ENCODE measurements at regions of chrX and their contacts with region 1.

Region 1: DNA sequence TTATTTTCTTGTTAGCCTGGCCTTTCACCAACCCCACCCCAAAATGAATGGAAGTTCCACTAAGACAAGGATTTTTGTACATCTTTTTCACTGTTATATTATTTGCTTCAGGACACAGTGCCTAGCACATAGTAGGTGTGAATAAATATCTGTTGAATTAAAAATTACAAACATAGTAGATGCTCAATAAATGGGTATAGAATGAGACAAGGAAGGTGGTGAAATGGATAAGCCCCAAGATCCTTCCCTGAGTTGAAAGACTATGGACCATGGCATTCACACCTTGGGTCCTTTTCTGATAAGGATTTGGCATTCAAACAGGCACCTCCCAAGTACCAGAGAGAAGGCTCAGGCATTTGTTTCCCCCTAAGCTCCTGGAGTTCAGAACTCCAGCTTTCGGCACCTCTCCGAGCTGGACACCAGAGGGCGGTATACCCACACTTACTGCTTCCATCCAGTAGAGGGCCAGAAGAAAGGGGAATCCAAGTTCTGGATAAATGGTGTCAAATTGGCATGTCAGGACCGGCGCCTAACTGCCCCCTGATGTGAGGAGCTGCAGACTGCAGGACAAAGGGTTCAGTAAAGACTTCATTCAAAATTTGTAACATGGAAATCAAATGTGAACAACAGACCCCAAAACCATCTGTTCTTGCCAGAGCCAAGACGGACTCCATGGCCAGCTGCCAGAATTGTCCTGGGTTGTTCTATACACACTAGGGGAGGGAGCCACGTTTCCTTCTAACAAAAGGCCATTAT is 193.0 kb downstream of the GPC3 start:
- DNase-seq: peak; percentile 59
- ATAC-seq: peak; percentile 91
- H3K4me3 ChIP-seq: 0 out of 4 replicates have a peak overlapping the region, but pooled peaks of 1 of the 2 experiments have one; percentile 23
- H3K27ac ChIP-seq: no peak overlapping the region
- H3K4me1 ChIP-seq: peaks cover 0 to 3% of the 10 kb centered on the region in 2 experiments; a peak in 1 of 4 replicates
- H3K27me3 ChIP-seq: no peaks in the 10 kb centered on the region
- CTCF ChIP-seq: peak; percentile 92 to 99 (median 94)
- POLR2A ChIP-seq: no peak
- RAD21 ChIP-seq: peak; percentile 80

Region 2: DNA sequence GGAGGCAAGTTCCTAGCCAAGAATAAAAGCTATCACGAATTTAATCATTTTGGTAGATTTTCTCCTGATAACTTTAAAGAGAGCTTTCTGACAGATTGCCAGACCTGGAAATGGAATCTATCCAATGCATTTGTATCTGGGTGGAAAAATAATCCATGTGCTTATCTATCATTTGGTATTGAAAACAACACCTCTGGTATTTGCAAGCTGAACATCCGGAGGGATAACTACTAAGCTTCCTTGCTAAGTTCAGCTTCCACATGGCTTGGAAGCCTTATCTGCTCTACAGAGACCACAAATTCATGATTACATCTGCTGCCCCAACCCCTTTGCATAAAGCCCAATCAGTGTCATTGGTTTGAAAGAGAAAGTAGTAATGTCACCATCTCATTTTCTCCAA is 37.7 kb before region 1 on chrX:
- CTCF ChIA-PET with region 1: no interaction called
- POLR2A ChIA-PET with region 1: no interaction called
- RAD21 ChIA-PET with region 1: no interaction called
- intact Hi-C with region 1: no loop called
- DNase-seq: no peak
- ATAC-seq: no peak
- H3K4me3 ChIP-seq: no peak overlapping the region
- H3K27ac ChIP-seq: no peak overlapping the region
- H3K4me1 ChIP-seq: no peaks in the 10 kb centered on the region
- H3K27me3 ChIP-seq: 0 out of 2 replicates have a peak, but pooled peaks cover 9% of the 10 kb centered on the region
- CTCF ChIP-seq: no peak
- POLR2A ChIP-seq: no peak
- RAD21 ChIP-seq: no peak

Region 3: DNA sequence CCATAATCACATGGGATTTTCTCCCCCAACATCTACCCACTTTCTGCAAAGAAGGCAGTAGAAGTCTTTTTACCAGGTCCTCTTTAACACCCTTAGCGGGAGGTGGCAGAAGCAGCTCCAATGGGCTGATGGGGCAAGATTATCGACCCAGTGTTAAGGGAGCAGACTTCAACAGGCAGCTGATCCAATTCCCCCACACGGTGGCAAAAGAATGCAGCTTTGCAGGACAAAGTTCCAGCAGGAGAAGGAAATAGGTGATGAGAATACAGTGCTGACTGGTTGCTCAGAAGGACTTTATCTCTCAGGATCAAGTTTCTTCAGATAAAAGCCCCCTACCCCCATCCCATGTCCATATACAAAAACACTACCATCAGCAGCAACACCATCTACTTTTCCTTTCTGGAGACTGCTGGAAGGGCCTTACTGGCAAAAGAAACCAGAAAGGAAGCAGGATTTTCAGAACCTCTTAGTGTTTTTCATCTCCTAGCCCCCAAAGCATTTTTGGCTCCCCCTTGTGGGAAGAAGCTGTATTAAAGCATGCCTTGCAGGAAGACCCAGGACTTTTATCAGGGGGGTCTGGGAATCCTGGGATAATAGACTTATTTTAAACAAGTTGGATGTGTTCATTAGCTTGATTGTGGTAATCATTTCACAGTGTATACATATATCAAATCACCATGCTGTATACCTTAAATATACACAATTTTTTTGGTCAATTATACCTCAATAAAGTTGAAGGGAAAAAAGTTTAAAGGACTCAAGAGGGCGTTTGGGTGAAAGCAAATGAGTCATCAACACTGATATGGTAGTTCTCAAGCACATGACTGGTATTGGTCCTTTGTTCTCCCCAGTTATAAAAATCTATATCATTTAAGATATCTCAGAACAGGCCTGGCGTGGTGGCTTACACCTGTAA is 46.6 kb after region 1 on chrX:
- CTCF ChIA-PET with region 1: interaction called, 17 read pairs
- POLR2A ChIA-PET with region 1: no interaction called
- RAD21 ChIA-PET with region 1: interaction called in 1 of 2 experiments, 3 read pairs
- intact Hi-C with region 1: loop called (anchors 1 kb)
- DNase-seq: peak; percentile 3
- ATAC-seq: peak; percentile 53; the same call in 1 of the 2 replicates
- H3K4me3 ChIP-seq: no peak overlapping the region
- H3K27ac ChIP-seq: no peak overlapping the region
- H3K4me1 ChIP-seq: no peaks in the 10 kb centered on the region
- H3K27me3 ChIP-seq: no peaks in the 10 kb centered on the region
- CTCF ChIP-seq: peak; percentile 40 to 64 (median 61); a peak in 5 of 6 replicates
- POLR2A ChIP-seq: no peak
- RAD21 ChIP-seq: peak; percentile 30; the same call in 1 of the 2 replicates

Region 4: GRCh38 chrX:133921764-133922389 is 129.5 kb after region 1 on chrX:
- CTCF ChIA-PET with region 1: interaction called, 5 read pairs
- POLR2A ChIA-PET with region 1: no interaction called
- RAD21 ChIA-PET with region 1: interaction called in 1 of 2 experiments, 4 read pairs
- intact Hi-C with region 1: loop called (anchors 2 kb)
- DNase-seq: peak; percentile 50
- ATAC-seq: peak; percentile 97
- H3K4me3 ChIP-seq: no peak overlapping the region
- H3K27ac ChIP-seq: no peak overlapping the region
- H3K4me1 ChIP-seq: no peaks in the 10 kb centered on the region
- H3K27me3 ChIP-seq: no peaks in the 10 kb centered on the region
- CTCF ChIP-seq: peak; percentile 50 to 74 (median 63)
- POLR2A ChIP-seq: no peak
- RAD21 ChIP-seq: peak; percentile 65

Region 5: DNA sequence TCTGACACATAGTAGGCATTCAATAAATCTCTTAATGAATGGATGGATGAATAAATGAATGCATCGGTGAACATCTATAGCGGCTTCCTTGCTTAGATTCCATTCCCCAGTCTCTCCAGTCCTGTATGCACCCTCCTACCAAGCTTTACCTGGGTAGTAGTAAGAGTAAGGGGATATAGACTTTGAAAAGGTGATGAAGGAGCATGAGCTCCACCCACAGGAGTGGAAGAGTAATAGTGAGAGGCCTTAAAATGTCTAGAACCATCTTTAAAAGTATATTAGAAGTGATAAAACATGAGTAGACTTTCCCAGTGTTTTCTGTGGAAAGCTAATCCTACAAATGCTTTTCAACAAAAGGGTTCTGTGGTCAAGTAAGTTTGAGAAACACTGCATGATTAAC is 228.5 kb after region 1 on chrX:
- CTCF ChIA-PET with region 1: interaction called, 25 read pairs
- POLR2A ChIA-PET with region 1: no interaction called
- RAD21 ChIA-PET with region 1: no interaction called
- intact Hi-C with region 1: loop called (anchors 5 kb)
- DNase-seq: no peak
- ATAC-seq: no peak
- H3K4me3 ChIP-seq: no peak overlapping the region
- H3K27ac ChIP-seq: no peak overlapping the region
- H3K4me1 ChIP-seq: no peaks in the 10 kb centered on the region
- H3K27me3 ChIP-seq: no peaks in the 10 kb centered on the region
- CTCF ChIP-seq: 0 out of 6 replicates have a peak, but pooled peaks of 1 of the 3 experiments have one; percentile 18
- POLR2A ChIP-seq: no peak
- RAD21 ChIP-seq: peak; percentile 27; the same call in 1 of the 2 replicates

Region 6: GRCh38 chrX:134026565-134027311 is 234.4 kb after region 1 on chrX:
- CTCF ChIA-PET with region 1: interaction called, 25 read pairs
- POLR2A ChIA-PET with region 1: no interaction called
- RAD21 ChIA-PET with region 1: no interaction called
- intact Hi-C with region 1: loop called (anchors 5 kb)
- DNase-seq: peak; percentile 10
- ATAC-seq: peak; percentile 70
- H3K4me3 ChIP-seq: no peak overlapping the region
- H3K27ac ChIP-seq: no peak overlapping the region
- H3K4me1 ChIP-seq: no peaks in the 10 kb centered on the region
- H3K27me3 ChIP-seq: no peaks in the 10 kb centered on the region
- CTCF ChIP-seq: peak; percentile 13 to 55 (median 39); a peak in 4 of 6 replicates
- POLR2A ChIP-seq: no peak
- RAD21 ChIP-seq: peak; percentile 32; the same call in 1 of the 2 replicates

Region 7: GRCh38 chrX:134144231-134144630 is 351.9 kb after region 1 on chrX:
- CTCF ChIA-PET with region 1: interaction called, 5 read pairs
- POLR2A ChIA-PET with region 1: no interaction called
- RAD21 ChIA-PET with region 1: no interaction called
- intact Hi-C with region 1: loop called (anchors 1 kb)
- DNase-seq: peak; percentile 1
- ATAC-seq: peak; percentile 47
- H3K4me3 ChIP-seq: no peak overlapping the region
- H3K27ac ChIP-seq: no peak overlapping the region
- H3K4me1 ChIP-seq: no peaks in the 10 kb centered on the region
- H3K27me3 ChIP-seq: no peaks in the 10 kb centered on the region
- CTCF ChIP-seq: peak; percentile 28 to 44 (median 29); a peak in 5 of 6 replicates
- POLR2A ChIP-seq: no peak
- RAD21 ChIP-seq: peak; percentile 29; the same call in 1 of the 2 replicates

Measured in HCT116 (cell line).